ENCODE measurements at regions of chr18 and their contacts with region 1.

Region 1: DNA sequence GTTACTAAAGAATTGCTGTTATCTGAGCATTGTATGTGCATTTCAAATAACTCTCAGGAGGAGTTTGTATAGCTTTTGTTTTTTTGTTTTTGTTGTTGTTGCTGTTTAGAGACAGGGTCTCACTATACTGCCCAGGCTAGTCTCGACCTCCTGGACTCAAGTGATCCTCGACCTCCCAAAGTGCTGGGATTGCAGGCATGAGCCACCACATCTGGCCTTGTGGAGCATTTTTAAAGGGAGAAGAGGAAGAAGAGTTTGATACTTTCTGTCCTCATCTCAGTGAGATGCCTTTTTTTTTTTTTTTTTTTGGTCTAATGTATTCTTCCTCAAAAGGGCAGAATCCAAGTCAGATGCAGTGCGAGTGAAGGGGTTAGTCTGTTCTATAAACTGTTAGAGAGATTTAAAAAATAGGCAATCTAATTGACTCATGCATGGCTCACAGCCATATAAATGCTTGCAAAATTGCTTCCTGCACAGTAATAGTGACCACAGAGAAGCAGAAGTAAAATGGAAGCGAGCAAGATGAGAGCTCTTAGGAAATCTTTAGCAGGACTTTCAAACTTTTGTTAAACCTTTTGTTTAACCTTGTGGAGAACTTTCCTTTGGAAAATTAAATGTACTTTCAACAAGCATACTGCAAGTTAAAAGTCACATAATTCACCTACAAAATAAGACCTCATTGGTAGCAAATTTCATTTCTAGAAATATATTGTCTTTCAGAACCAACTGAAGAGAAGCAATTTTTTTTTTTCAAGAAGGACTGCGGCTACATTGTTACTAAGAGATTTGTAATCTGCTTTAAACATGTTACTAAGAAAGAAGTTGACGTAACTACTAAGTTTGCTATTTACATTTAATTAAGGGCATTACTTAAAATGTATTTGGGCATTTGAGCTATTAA is 52.3 kb upstream of the ROCK1 start:
- DNase-seq: peak; percentile 77
- H3K4me3 ChIP-seq: no peak overlapping the region
- H3K27ac ChIP-seq: no peak overlapping the region
- H3K4me1 ChIP-seq: peaks cover 4% of the 10 kb centered on the region
- H3K27me3 ChIP-seq: no peaks in the 10 kb centered on the region
- CTCF ChIP-seq: no peak

Region 2: DNA sequence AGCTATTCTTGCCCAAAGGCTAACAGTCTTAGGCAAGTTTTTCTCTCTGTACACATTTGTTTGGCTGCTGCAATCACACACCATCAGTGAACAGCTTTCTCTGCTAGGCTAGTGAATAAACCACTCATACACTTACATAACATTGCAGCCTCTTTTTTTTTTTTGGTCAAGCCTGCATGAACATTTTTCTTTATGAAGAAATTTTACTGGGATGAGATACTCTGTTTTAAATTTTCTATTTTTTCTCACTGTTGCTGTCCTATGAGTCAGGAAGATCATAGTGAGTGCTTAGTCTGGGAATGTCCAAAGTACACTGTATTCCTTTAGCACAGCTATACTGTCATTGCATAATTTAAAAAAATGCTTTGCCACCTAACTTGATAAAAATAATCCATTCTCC is 110.8 kb before region 1 on chr18:
- CTCF ChIA-PET with region 1: no interaction called
- dilution Hi-C with region 1: no loop called
- in situ Hi-C with region 1: loop called in 1 of 2 experiments (anchors 25 kb)
- intact Hi-C with region 1: no loop called
- DNase-seq: peak; percentile 87
- H3K4me3 ChIP-seq: no peak overlapping the region
- H3K27ac ChIP-seq: peak overlapping the region; percentile 68
- H3K4me1 ChIP-seq: peaks cover 37% of the 10 kb centered on the region
- H3K27me3 ChIP-seq: no peaks in the 10 kb centered on the region
- CTCF ChIP-seq: no peak

Region 3: DNA sequence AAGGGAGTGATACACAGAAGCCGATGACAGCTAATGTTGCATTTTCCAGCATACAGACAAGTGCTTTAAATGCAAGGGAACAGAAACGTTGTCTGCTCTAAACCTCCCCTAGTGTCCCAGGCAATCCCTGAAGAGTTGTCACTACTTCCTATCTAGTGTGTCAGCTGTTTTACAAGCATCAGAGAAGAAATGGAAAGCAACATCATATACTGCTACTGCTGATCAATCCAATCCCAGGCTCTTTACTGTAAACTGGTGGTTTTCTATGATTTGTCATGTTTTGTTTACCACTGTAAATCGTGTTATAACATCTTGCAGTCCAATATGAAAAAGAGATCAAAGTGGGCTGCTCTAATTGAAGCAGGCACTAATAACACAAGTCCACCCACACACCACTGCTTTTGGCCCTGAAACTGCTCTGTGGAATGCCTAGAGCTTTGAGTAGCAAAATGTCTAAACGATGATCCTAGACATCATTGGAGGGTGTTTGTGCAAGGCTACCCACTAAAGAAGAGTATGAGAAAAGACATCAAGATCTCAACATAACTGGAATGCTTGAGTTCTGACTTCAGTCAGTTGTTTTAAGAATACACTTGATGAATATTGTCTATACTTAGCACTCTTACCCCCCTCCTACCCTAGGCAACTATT is 34.2 kb before region 1 on chr18:
- CTCF ChIA-PET with region 1: no interaction called
- dilution Hi-C with region 1: no loop called
- in situ Hi-C with region 1: no loop called
- intact Hi-C with region 1: loop called (anchors 5 kb)
- DNase-seq: no peak
- H3K4me3 ChIP-seq: no peak overlapping the region
- H3K27ac ChIP-seq: no peak overlapping the region
- H3K4me1 ChIP-seq: no peaks in the 10 kb centered on the region
- H3K27me3 ChIP-seq: no peaks in the 10 kb centered on the region
- CTCF ChIP-seq: no peak

Region 4: DNA sequence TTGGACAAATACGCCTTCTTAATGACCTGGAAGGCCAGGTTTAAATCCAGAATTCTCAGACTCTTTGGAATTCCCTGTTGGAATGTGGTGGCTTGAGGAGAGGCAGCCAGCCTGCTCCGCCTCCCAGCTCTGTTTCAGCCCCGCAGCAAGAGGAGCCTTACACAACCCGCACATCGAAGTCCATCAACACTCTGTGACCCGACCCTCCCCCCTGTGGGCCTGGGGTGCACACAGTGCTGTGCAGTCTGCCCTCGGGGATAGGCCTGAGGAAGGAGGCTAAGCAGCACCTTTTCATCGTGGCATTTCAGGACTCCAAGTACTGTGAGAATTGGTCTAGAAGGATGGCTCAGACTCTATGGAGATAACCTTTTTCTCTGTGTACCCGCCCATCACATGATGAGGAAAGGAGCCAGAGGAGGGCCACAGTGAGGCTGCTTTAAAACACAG is 151.9 kb after region 1 on chr18:
- CTCF ChIA-PET with region 1: no interaction called
- dilution Hi-C with region 1: no loop called
- in situ Hi-C with region 1: loop called in 1 of 2 experiments (anchors 25 kb)
- intact Hi-C with region 1: no loop called
- DNase-seq: no peak
- H3K4me3 ChIP-seq: no peak overlapping the region
- H3K27ac ChIP-seq: no peak overlapping the region
- H3K4me1 ChIP-seq: peaks cover 3% of the 10 kb centered on the region
- H3K27me3 ChIP-seq: no peaks in the 10 kb centered on the region
- CTCF ChIP-seq: no peak

Measured in mammary epithelial cell (primary cell).